ENCODE measurements at regions of chr11 and their contacts with region 1.

Region 1: DNA sequence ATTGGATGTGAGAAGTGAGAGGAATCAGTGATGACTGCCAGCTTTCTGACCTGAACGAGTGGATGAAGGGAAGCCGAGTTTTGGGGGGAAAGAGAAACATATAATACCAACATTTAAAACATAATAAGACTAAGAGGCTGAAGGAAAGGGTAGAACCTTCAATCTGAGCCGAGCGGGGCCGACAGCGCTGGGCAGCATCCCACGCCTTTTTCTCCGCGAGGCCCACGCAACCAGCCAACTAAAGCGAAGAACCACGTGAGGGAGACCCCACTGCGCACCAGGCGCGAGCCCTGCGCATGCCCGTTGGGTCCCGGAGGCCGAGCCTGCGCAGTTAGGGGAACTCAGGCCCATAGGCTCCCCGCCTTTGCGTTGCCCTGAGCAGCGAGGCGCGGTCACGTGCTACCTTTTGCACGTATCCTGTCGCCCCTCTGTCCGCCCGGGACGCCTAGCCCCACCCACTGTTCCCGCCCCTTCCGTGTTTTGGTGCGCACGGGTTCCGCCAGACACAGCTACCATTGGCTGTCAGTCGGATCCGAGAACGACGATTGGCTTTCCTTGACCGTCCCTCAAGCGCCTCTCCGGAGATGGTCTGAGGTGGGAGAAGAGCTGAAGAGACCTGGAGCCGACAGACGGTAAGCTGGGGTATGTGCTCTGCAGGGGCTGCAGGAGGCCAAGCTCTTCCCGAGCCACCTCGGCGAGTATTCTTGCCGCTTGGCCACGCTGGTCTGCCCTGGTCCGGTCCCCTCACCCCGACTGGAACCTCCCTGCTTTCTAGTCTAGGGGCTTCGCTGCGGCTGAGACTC is at the start of gene HINFP:
- DNase-seq: peak; percentile 100
- H3K4me3 ChIP-seq: peak within 1 kb of the TSS; percentile 62 to 93 (median 85)
- H3K27ac ChIP-seq: peak within 1 kb of the TSS; percentile 4
- H3K4me1 ChIP-seq: peaks cover 11% of the 10 kb centered on the region
- H3K27me3 ChIP-seq: no peaks in the 10 kb centered on the region
- CTCF ChIP-seq: no peak
- POLR2A ChIP-seq: peak; percentile 97
- total RNA-seq, gene HINFP: 32.6 and 33.4 TPM in 2 replicates

Region 2: DNA sequence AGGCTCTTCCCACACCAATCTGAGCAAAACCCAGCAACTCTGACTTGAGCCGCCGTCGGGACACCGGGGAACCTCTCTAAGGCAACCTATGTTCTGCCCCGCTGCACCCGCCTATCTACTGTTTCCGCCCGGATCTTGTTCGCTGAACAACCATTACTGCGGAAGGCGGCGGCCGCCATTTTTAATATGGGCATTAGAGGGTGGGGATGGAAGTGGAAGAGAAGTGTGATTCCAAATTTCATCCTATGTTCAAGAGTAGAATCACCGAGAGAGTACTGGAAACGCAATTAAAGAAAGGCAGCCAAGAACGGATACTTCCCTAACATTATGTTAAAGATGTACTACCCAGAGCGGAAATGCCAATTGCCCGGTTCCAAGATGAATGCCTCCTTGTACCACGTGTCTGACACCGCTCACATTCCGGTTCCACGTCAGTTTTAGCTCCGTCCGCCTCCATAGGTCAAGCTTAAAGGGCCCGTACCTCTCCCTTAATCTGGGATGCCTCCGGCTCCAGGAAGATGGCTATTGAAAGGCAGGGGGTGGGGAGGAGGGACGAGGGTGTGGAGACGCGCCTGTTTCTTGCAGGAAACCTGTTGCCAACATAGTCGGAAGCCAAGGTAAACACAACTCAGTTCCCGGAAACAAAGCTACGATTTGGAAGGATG is 19.3 kb before region 1 on chr11 and contains the start of gene DPAGT1:
- CTCF ChIA-PET with region 1: interaction called, 15 read pairs
- POLR2A ChIA-PET with region 1: interaction called, 7 read pairs
- dilution Hi-C with region 1: no loop called
- intact Hi-C with region 1: loop called (anchors 1 kb)
- DNase-seq: peak; percentile 96
- H3K4me3 ChIP-seq: peak within 1 kb of the TSS; percentile 81 to 97 (median 86)
- H3K27ac ChIP-seq: peak within 1 kb of the TSS; percentile 94
- H3K4me1 ChIP-seq: peaks cover 21% of the 10 kb centered on the region
- H3K27me3 ChIP-seq: no peaks in the 10 kb centered on the region
- CTCF ChIP-seq: no peak
- POLR2A ChIP-seq: no peak
- total RNA-seq, gene DPAGT1: 48.4 and 62.0 TPM in 2 replicates

Region 3: DNA sequence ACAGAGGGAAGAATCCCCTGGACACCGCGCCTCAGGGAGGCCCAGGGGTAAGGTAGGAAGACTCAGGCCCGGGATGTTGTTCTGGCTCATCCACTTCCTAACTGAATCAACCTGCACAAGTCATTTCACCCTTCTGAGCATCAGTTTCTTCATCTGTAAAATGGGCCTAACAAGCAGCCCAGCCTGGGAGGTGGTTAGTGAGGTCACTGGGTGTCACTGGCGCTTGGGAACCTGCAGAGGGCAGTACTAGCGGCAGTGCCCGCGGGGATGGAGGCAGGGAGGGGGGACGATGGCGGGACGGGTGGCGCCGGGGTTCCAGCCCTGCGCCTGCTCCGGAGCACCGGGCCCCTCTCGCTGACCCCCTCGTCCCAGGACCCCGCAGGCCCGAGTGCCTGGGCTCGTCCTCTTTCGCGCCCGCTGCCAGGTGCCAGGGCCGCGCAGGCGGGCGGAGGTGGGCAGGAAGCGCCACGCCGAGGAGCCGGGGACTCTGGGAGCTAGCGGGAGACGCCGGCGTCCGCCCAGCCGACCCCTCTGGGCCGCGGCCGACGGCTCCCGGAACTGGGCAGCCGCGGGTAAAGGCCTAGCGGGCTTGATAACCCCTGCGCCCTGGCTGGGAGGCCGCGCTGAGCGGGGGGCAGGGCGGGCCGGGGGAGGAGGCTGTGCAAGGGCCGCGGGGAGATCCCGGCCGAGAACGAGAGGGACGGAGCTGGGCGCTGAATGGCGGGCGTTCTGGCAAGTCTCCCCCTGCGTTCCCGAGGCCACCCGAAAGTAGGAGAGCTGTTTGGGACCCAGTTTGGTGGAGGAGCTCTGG is 47.5 kb after region 1 on chr11 and contains the start of gene NLRX1:
- CTCF ChIA-PET with region 1: interaction called, 5 read pairs
- POLR2A ChIA-PET with region 1: no interaction called
- dilution Hi-C with region 1: no loop called
- intact Hi-C with region 1: loop called (anchors 1 kb)
- DNase-seq: peak; percentile 79
- H3K4me3 ChIP-seq: peak within 1 kb of the TSS; percentile 6 to 48 (median 17)
- H3K27ac ChIP-seq: peak within 1 kb of the TSS; percentile 55
- H3K4me1 ChIP-seq: peaks cover 11% of the 10 kb centered on the region
- H3K27me3 ChIP-seq: no peaks in the 10 kb centered on the region
- CTCF ChIP-seq: peak; percentile 89 to 94
- POLR2A ChIP-seq: peak; percentile 71
- total RNA-seq, gene NLRX1: 14.6 and 15.1 TPM in 2 replicates